H1 (cell line): ENCODE measurements at regions of chr2 and their contacts with region 1.

Region 1: DNA sequence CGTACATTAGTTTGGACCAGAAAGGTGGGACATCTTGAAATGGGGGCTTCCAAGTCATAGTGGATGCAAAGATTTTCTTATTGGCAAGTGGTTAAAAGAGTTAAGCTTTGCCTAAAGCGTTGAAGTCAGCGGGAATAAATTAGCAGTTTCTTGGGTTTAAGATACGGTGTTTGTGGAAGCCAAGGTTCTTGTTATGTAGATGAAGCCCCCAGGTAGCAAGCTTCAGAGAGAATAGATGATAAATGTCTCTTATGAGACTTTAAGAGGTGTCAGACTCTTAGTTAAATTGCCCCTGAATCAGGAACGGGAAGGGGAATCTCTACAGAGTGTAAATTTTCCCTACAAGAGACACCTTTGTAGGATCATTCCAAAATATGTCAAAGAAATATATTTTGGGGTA is 10.9 kb upstream of the GLS start:
- DNase-seq: no peak
- H3K4me3 ChIP-seq: peak overlapping the region in 1 of 4 experiments; percentile 28; a peak in 1 of 8 replicates
- H3K27ac ChIP-seq: no peak overlapping the region
- H3K4me1 ChIP-seq: peaks cover 0 to 2% (median 0%) of the 10 kb centered on the region in 4 experiments; a peak in 2 of 7 replicates
- H3K27me3 ChIP-seq: no peaks in the 10 kb centered on the region
- CTCF ChIP-seq: no peak
- EP300 ChIP-seq: no peak
- POLR2A ChIP-seq: no peak
- RAD21 ChIP-seq: no peak

Region 2: DNA sequence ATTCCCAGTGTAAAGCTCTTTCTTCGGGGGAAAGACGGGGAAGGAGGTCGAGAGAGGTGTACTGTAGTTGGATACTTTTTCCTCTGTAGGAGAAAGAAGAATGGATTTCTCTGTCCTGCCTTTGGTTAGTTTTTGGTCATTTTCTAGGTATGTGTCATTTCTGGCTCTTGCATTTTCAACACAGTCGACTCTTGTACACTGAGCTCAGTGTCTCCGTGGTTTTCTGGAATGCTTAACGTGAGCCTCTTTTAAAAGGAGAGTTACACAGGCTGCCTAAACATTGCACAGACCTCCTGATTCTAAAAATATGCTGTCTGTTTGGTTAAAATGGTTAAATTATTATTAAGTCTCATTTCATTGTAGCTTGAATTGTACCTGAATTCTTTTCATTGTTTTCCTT is 10.9 kb before region 1 on chr2:
- CTCF ChIA-PET with region 1: interaction called, 5 read pairs
- POLR2A ChIA-PET with region 1: interaction called, 20 read pairs
- DNase-seq: no peak
- H3K4me3 ChIP-seq: no peak overlapping the region
- H3K27ac ChIP-seq: no peak overlapping the region
- H3K4me1 ChIP-seq: peaks cover 2 to 14% (median 9%) of the 10 kb centered on the region in 4 experiments; a peak in 6 of 7 replicates
- H3K27me3 ChIP-seq: no peaks in the 10 kb centered on the region
- CTCF ChIP-seq: no peak
- EP300 ChIP-seq: no peak
- POLR2A ChIP-seq: no peak
- RAD21 ChIP-seq: no peak